Activated CD4-positive, alpha-beta T cell treated with anti-CD3 and anti-CD28 coated beads for 36 hours (primary cell): ENCODE measurements at regions of chr11 and their contacts with region 1.

Region 1: GRCh38 chr11:28981381-28981780 is 873.2 kb downstream of the METTL15 start:
- DNase-seq: no peak
- ATAC-seq: no peak
- H3K4me3 Mint-ChIP-seq: no peak overlapping the region
- H3K27ac Mint-ChIP-seq: no peak overlapping the region
- H3K4me1 Mint-ChIP-seq: no peaks in the 10 kb centered on the region
- H3K27me3 Mint-ChIP-seq: no peaks in the 10 kb centered on the region

Region 2: DNA sequence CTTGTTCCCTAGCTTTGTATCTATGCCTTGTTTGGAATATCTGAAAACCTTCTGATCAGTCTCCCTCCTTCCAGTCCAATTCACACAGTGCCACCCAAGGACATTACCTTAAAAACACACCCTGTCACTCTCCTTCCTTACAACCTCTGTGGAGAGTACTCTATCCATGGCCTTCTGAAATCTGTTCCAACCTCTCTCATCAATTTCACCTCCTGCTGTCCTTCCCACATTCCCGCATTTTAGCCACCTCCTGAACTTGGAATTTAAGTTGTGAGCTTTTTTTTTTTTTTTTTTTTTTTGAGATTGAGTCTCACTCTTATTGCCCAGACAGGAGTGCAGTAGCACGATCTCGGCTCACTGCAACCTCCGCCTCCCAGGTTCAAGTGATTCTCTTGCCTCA is 48.4 kb before region 1 on chr11:
- CTCF ChIA-PET with region 1: no interaction called
- POLR2A ChIA-PET with region 1: no interaction called
- intact Hi-C with region 1: no loop called
- DNase-seq: no peak
- ATAC-seq: no peak
- H3K4me3 Mint-ChIP-seq: no peak overlapping the region
- H3K27ac Mint-ChIP-seq: no peak overlapping the region
- H3K4me1 Mint-ChIP-seq: no peaks in the 10 kb centered on the region
- H3K27me3 Mint-ChIP-seq: no peaks in the 10 kb centered on the region

Region 3: GRCh38 chr11:28992996-28993395 is 11.6 kb after region 1 on chr11:
- CTCF ChIA-PET with region 1: no interaction called
- POLR2A ChIA-PET with region 1: no interaction called
- intact Hi-C with region 1: loop called in 1 of 2 experiments (anchors 1 kb)
- DNase-seq: no peak
- ATAC-seq: no peak
- H3K4me3 Mint-ChIP-seq: no peak overlapping the region
- H3K27ac Mint-ChIP-seq: no peak overlapping the region
- H3K4me1 Mint-ChIP-seq: no peaks in the 10 kb centered on the region
- H3K27me3 Mint-ChIP-seq: no peaks in the 10 kb centered on the region